A549 (cell line): ENCODE measurements at regions of chr12 and their contacts with region 1.

Region 1: GRCh38 chr12:119780786-119781434 is 96.2 kb downstream of the CIT start:
- DNase-seq: peak; percentile 57 to 64
- ATAC-seq: peak in 1 of 2 experiments; percentile 85; a peak in 3 of 6 replicates
- H3K4me3 ChIP-seq: no peak overlapping the region
- H3K27ac ChIP-seq: no peak overlapping the region
- H3K4me1 ChIP-seq: no peaks in the 10 kb centered on the region
- CTCF ChIP-seq: peak; percentile 87
- EP300 ChIP-seq: no peak
- POLR2A ChIP-seq: no peak
- RAD21 ChIP-seq: peak; percentile 45 to 52; a peak in 4 of 5 replicates

Region 2: GRCh38 chr12:119601877-119602733 is 178.8 kb before region 1 on chr12:
- CTCF ChIA-PET with region 1: no interaction called
- POLR2A ChIA-PET with region 1: no interaction called
- DNase-seq: no peak
- ATAC-seq: no peak
- H3K4me3 ChIP-seq: no peak overlapping the region
- H3K27ac ChIP-seq: no peak overlapping the region
- H3K4me1 ChIP-seq: no peaks in the 10 kb centered on the region
- CTCF ChIP-seq: no peak
- EP300 ChIP-seq: no peak
- POLR2A ChIP-seq: no peak
- RAD21 ChIP-seq: no peak

Region 3: DNA sequence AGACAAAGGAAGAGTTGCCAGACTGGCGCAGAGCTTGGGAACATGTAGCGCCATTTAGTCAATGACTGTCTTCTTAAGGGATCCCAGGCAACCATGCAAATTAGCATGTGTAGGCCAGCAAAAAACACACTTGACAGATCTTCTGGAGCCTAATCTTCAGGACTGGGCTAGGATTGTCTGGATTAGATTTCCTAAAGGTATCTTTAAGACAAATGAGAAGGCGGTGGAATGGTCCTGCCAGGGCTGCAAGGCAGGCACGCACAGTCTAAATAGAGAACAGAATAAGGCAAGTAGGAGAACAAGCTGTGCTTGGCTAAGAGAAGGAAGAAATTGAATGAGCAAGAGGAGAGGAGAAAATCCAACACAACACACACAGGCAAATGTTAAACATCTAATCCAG is 16.2 kb after region 1 on chr12:
- CTCF ChIA-PET with region 1: interaction called, 36 read pairs
- POLR2A ChIA-PET with region 1: no interaction called
- DNase-seq: no peak
- ATAC-seq: no peak
- H3K4me3 ChIP-seq: no peak overlapping the region
- H3K27ac ChIP-seq: no peak overlapping the region
- H3K4me1 ChIP-seq: no peaks in the 10 kb centered on the region
- CTCF ChIP-seq: no peak
- EP300 ChIP-seq: no peak
- POLR2A ChIP-seq: no peak
- RAD21 ChIP-seq: no peak

Region 4: GRCh38 chr12:119938049-119938667 is 157.2 kb after region 1 on chr12:
- CTCF ChIA-PET with region 1: interaction called, 10 read pairs
- POLR2A ChIA-PET with region 1: no interaction called
- DNase-seq: peak; percentile 68 to 81
- ATAC-seq: peak; percentile 62 to 73; a peak in 5 of 6 replicates
- H3K4me3 ChIP-seq: no peak overlapping the region
- H3K27ac ChIP-seq: no peak overlapping the region
- H3K4me1 ChIP-seq: peaks cover 16% of the 10 kb centered on the region
- CTCF ChIP-seq: peak; percentile 84
- EP300 ChIP-seq: no peak
- POLR2A ChIP-seq: no peak
- RAD21 ChIP-seq: peak; percentile 69 to 84